Naive thymus-derived CD4-positive, alpha-beta T cell (primary cell): ENCODE measurements at regions of chr11 and their contacts with region 1.

Region 1: GRCh38 chr11:8099291-8099899 is 18.4 kb downstream of the TUB start:
- DNase-seq: peak; percentile 39 to 66 (median 55)
- ATAC-seq: peak; percentile 60
- H3K4me3 ChIP-seq: no peak overlapping the region
- H3K4me3 Mint-ChIP-seq: no peak overlapping the region
- H3K27ac ChIP-seq: no peak overlapping the region
- H3K27ac Mint-ChIP-seq: peak overlapping the region in 1 of 9 donors; percentile 14
- H3K4me1 ChIP-seq: no peaks in the 10 kb centered on the region
- H3K4me1 Mint-ChIP-seq: peaks cover 0 to 2% (median 0%) of the 10 kb centered on the region in 7 donors
- H3K27me3 ChIP-seq: no peaks in the 10 kb centered on the region
- H3K27me3 Mint-ChIP-seq: no peaks in the 10 kb centered on the region

Region 2: DNA sequence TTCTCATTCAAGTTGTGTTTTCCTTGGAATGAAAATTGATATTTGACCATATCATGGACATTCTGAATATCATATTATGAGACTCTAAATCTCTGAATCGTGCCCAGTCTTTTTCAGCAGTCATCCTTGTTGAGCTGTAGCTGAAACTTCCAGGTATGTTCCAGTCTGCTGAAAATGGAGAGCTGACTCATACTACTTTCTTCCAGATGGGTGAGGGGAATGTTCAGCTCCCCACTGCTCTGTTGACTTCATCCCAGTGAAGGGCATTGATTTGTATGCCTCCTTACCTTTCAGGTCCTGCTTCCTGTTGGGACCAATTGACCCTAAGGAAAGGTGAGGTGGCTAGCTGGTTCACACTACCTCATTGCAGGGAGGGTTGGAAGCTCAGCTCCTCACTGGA is 306.2 kb before region 1 on chr11:
- CTCF ChIA-PET with region 1: no interaction called
- POLR2A ChIA-PET with region 1: no interaction called
- intact Hi-C with region 1: no loop called
- DNase-seq: no peak
- ATAC-seq: no peak
- H3K4me3 ChIP-seq: no peak overlapping the region
- H3K4me3 Mint-ChIP-seq: no peak overlapping the region
- H3K27ac ChIP-seq: no peak overlapping the region
- H3K27ac Mint-ChIP-seq: no peak overlapping the region
- H3K4me1 ChIP-seq: no peaks in the 10 kb centered on the region
- H3K4me1 Mint-ChIP-seq: no peaks in the 10 kb centered on the region
- H3K27me3 ChIP-seq: no peaks in the 10 kb centered on the region
- H3K27me3 Mint-ChIP-seq: peaks cover 0 to 17% (median 7%) of the 10 kb centered on the region in 5 donors

Region 3: DNA sequence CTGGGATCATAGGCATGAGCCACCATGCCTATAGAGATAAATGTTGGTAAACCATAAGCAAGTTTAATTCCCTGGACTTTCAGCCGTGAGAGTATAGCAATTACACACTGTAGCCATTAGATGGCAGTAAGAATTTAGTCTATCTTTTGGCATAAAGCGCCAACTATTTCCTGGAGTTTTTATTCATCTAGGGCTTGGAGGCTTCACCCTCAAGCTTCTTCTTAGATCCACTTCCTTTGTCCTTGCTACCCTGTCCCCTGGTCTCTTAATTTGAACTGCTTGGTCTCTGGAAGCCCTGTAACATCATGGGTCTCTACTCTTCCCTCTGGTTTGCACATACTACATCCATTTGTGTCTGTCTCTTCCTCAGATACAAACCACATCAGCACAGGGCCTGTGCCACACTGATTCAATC is 206.5 kb before region 1 on chr11:
- CTCF ChIA-PET with region 1: interaction called, 12 read pairs
- POLR2A ChIA-PET with region 1: no interaction called
- intact Hi-C with region 1: loop called in 1 of 2 experiments (anchors 2 kb)
- DNase-seq: peak in 6 of 9 donors; percentile 26 to 46 (median 40)
- ATAC-seq: peak; percentile 67
- H3K4me3 ChIP-seq: no peak overlapping the region
- H3K4me3 Mint-ChIP-seq: no peak overlapping the region
- H3K27ac ChIP-seq: no peak overlapping the region
- H3K27ac Mint-ChIP-seq: no peak overlapping the region
- H3K4me1 ChIP-seq: no peaks in the 10 kb centered on the region
- H3K4me1 Mint-ChIP-seq: peaks cover 0 to 7% (median 3%) of the 10 kb centered on the region in 7 donors
- H3K27me3 ChIP-seq: no peaks in the 10 kb centered on the region
- H3K27me3 Mint-ChIP-seq: peaks cover 4 to 22% (median 9%) of the 10 kb centered on the region in 5 donors

Region 4: GRCh38 chr11:8006349-8006977 is 92.9 kb before region 1 on chr11:
- CTCF ChIA-PET with region 1: interaction called, 26 read pairs
- POLR2A ChIA-PET with region 1: no interaction called
- intact Hi-C with region 1: loop called (anchors 1 kb)
- DNase-seq: peak in 6 of 9 donors; percentile 19 to 34 (median 28)
- ATAC-seq: peak; percentile 81
- H3K4me3 ChIP-seq: no peak overlapping the region
- H3K4me3 Mint-ChIP-seq: no peak overlapping the region
- H3K27ac ChIP-seq: no peak overlapping the region
- H3K27ac Mint-ChIP-seq: no peak overlapping the region
- H3K4me1 ChIP-seq: no peaks in the 10 kb centered on the region
- H3K4me1 Mint-ChIP-seq: no peaks in the 10 kb centered on the region
- H3K27me3 ChIP-seq: no peaks in the 10 kb centered on the region
- H3K27me3 Mint-ChIP-seq: peaks cover 0 to 11% (median 6%) of the 10 kb centered on the region in 5 donors

Region 5: DNA sequence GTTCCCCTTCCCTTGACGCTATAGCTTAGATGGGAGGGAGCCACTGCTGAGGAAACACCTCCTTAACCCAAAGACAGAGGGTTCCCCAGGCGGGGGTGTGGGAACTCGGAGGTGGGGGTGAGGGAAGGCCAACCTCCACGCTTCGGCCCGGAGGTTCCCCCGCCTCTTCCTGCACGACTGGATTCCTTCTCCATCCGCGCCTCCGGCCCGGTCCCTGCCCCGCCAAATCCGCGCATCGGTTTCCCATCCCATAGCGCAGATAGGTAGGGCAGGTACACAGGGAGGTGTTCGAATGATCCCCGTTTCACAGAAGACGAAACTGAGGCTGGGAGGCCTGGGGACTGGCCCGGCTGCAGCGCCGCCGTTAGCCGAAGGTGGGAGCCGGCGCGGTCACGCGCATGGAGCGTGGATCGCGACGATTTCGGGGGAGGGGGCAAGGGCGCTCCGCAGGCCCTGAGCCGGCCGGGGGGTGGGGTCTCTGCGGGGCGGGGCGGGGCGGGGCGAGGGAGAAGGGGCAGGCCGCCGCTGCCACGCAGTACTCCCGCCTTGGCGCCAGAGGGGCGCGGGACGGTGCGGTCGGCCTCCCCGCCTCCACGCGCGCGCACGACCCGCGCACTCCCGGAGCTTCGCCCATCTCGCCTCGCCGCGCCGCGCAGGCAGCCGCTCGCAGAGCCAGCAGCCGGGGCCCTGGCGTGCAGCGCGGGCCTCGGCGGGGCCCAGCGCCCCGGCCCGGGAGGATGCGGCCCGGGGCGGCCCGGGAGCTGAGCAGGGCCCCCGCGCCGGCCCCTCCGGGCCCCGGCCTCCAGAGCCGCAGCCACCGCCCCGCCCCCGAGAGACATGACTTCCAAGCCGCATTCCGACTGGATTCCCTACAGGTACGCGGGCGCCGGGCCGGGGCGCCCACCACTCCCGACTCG is 18.5 kb before region 1 on chr11 and contains the start of gene TUB:
- CTCF ChIA-PET with region 1: no interaction called
- POLR2A ChIA-PET with region 1: no interaction called
- intact Hi-C with region 1: no loop called
- DNase-seq: no peak
- ATAC-seq: peak; percentile 33
- H3K4me3 ChIP-seq: no peak within 1 kb of the TSS
- H3K4me3 Mint-ChIP-seq: peak within 1 kb of the TSS; percentile 47 to 82 (median 71)
- H3K27ac ChIP-seq: no peak within 1 kb of the TSS
- H3K27ac Mint-ChIP-seq: no peak within 1 kb of the TSS
- H3K4me1 ChIP-seq: no peaks in the 10 kb centered on the region
- H3K4me1 Mint-ChIP-seq: peaks cover 0 to 10% (median 5%) of the 10 kb centered on the region in 7 donors
- H3K27me3 ChIP-seq: peaks cover 0 to 6% of the 10 kb centered on the region in 2 donors
- H3K27me3 Mint-ChIP-seq: peaks cover 47 to 68% (median 54%) of the 10 kb centered on the region in 5 donors
- total RNA-seq, gene TUB: 0.05 to 0.07 (median 0.05) TPM in 3 of 5 experiments, not detected in the others

Region 6: DNA sequence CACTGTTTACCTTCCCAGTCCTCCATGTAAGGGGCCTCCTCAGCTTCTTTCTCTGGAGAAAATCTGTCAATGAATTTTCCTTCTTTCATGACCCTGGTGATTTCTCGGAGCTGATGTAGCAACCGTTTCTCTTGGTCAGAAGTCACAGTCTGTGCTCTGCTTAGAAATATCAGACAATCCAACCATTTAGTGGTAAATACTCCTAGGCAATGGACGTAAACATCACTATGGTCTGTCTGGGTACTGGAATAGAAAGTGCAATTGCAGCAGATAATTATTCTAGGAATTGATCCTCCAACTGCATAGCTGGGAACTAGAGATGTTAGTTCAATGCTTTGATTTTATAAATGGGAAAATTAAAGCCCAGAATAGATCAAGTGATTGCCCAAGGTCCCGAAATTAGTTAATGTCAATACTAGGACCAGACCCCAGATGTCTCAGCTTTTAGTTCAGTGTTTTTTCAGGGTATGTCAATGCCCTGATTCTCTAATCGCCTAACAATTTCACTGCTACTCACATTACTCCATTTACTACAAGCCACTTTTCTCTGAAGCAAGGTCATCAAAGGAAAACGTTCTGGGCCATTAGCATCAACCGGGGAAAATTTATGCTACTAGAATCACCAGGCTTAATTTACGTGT is 27.4 kb after region 1 on chr11:
- CTCF ChIA-PET with region 1: no interaction called
- POLR2A ChIA-PET with region 1: no interaction called
- intact Hi-C with region 1: no loop called
- DNase-seq: no peak
- ATAC-seq: no peak
- H3K4me3 ChIP-seq: no peak overlapping the region
- H3K4me3 Mint-ChIP-seq: no peak overlapping the region
- H3K27ac ChIP-seq: no peak overlapping the region
- H3K27ac Mint-ChIP-seq: no peak overlapping the region
- H3K4me1 ChIP-seq: no peaks in the 10 kb centered on the region
- H3K4me1 Mint-ChIP-seq: peaks cover 0 to 5% (median 0%) of the 10 kb centered on the region in 7 donors
- H3K27me3 ChIP-seq: no peaks in the 10 kb centered on the region
- H3K27me3 Mint-ChIP-seq: peaks cover 0 to 5% (median 0%) of the 10 kb centered on the region in 5 donors